Colonic mucosa (tissue), 4 donors: ENCODE measurements at regions of chr11 and their contacts with region 1.

Region 1: DNA sequence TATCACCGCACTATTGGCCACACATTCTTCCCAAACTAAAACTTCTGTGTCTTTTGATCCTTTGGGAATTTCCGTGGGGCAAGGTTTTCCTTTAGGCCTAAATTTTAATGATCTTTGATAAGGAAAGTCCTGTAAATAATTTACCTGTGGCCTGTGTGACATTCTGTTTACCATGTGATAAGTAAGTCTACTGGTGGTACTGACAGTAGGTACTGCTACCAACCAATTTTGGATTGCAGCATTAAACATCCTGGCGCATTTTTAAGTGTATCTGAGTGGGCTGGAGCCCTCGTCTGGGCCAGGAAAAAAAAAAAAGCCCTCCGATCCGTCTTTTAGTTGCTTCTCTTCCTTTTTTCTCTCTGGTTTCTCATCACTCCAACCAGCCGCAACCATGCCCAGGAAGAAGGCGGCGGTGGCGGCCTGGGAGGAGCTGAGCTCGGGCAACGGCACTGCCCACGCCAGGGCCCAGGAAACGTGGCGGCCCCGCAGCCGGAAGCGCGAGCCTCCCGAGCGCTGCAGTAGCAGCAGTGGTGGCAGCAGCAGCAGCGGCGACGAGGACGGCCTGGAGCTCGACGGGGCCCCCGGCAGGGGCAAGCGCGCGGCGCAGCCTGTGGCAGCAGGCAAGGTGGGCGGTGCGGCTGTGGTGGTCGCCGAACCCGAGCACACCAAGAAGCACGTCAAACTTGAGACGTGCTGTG is 33.6 kb downstream of the ASRGL1 start:
- DNase-seq: peak; percentile 74
- H3K4me3 ChIP-seq: peak overlapping the region; percentile 13
- H3K27ac ChIP-seq: peak overlapping the region; percentile 80
- H3K4me1 ChIP-seq: peaks cover 9% of the 10 kb centered on the region
- H3K27me3 ChIP-seq: no peaks in the 10 kb centered on the region
- CTCF ChIP-seq: no peak

Region 2: DNA sequence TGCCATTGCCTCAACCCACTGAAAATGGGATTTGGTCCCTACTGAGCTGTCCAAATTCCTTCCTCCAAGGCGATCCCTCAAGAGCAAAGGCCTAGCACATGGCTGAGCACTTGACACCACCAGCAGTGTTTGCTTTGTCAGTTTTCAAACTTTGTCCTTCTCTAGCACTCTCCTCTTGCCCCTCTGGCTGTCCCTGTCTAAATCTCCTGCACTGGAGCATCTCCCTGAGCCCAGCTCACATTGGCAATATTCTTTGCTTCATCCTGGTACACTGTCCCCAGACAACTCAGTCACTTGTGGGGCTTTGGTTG is 336.9 kb before region 1 on chr11:
- intact Hi-C with region 1: no loop called
- DNase-seq: no peak
- H3K4me3 ChIP-seq: no peak overlapping the region
- H3K27ac ChIP-seq: no peak overlapping the region
- H3K4me1 ChIP-seq: no peaks in the 10 kb centered on the region
- H3K27me3 ChIP-seq: no peaks in the 10 kb centered on the region
- CTCF ChIP-seq: no peak

Region 3: GRCh38 chr11:62217191-62217748 is 153.6 kb before region 1 on chr11:
- intact Hi-C with region 1: loop called (anchors 5 kb)
- DNase-seq: no peak
- H3K4me3 ChIP-seq: no peak overlapping the region
- H3K27ac ChIP-seq: no peak overlapping the region
- H3K4me1 ChIP-seq: no peaks in the 10 kb centered on the region
- H3K27me3 ChIP-seq: no peaks in the 10 kb centered on the region
- CTCF ChIP-seq: peak; percentile 18

Region 4: GRCh38 chr11:62340269-62340901 is 30.5 kb before region 1 on chr11:
- intact Hi-C with region 1: loop called (anchors 2 kb)
- DNase-seq: peak; percentile 76
- H3K4me3 ChIP-seq: no peak overlapping the region
- H3K27ac ChIP-seq: peak overlapping the region; percentile 9
- H3K4me1 ChIP-seq: no peaks in the 10 kb centered on the region
- H3K27me3 ChIP-seq: no peaks in the 10 kb centered on the region
- CTCF ChIP-seq: peak; percentile 67